PC-9 (cell line): ENCODE measurements at regions of chr9 and their contacts with region 1.

Region 1: DNA sequence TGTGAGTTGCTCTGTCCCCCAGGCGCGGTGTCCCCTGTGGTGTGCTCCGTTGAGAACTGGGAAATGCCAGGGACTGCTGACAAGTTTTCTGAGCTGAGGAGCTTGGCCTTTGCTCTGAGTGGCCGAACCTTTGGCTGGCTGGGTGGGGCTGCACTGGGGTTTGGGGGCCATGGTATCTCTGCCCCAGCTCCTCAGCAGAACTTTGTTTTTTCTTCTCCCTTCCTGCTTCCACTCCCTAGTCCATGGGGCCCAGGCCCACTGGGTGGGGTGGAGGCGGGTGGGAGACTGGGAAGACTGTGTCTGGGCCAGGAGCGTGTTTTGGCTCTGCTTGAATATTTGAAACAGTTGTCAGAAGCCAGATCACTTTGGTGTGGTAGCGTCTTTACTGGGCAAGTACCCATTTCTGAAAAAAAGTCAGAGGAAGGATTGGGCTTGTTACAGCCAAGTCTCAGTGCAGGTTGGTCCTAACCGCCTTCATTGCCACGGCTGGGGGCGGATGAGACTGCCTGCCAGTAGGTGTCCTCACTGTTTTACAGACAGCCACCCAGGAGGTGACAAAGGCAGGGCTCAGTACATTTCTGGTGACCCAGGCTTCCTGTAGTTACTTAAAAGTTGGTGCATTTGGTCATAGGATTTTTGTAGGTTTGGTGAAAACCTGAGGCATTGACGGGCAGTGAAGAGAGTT is 92.7 kb downstream of the DAB2IP start:
- DNase-seq: peak in 1 of 2 experiments; percentile 67
- H3K4me3 ChIP-seq: peak overlapping the region; percentile 42; the same call in 1 of the 2 replicates
- H3K27ac ChIP-seq: no peak overlapping the region
- H3K4me1 ChIP-seq: peaks cover 50% of the 10 kb centered on the region
- H3K27me3 ChIP-seq: no peaks in the 10 kb centered on the region
- CTCF ChIP-seq: peak; percentile 56; the same call in 1 of the 2 replicates

Region 2: GRCh38 chr9:121640076-121640475 is 104.1 kb before region 1 on chr9:
- CTCF ChIA-PET with region 1: no interaction called
- POLR2A ChIA-PET with region 1: no interaction called
- intact Hi-C with region 1: loop called (anchors 1 kb)
- DNase-seq: peak in 1 of 2 experiments; percentile 44
- H3K4me3 ChIP-seq: no peak overlapping the region
- H3K27ac ChIP-seq: no peak overlapping the region
- H3K4me1 ChIP-seq: peaks cover 9% of the 10 kb centered on the region; the same call in 1 of the 2 replicates
- H3K27me3 ChIP-seq: no peaks in the 10 kb centered on the region
- CTCF ChIP-seq: peak; percentile 73

Region 3: GRCh38 chr9:121698627-121699570 is 45.2 kb before region 1 on chr9:
- CTCF ChIA-PET with region 1: no interaction called
- POLR2A ChIA-PET with region 1: no interaction called
- intact Hi-C with region 1: loop called (anchors 2 kb)
- DNase-seq: peak in 1 of 2 experiments; percentile 41
- H3K4me3 ChIP-seq: peak overlapping the region; percentile 60; the same call in 1 of the 2 replicates
- H3K27ac ChIP-seq: no peak overlapping the region
- H3K4me1 ChIP-seq: no peaks in the 10 kb centered on the region
- H3K27me3 ChIP-seq: no peaks in the 10 kb centered on the region
- CTCF ChIP-seq: no peak

Region 4: DNA sequence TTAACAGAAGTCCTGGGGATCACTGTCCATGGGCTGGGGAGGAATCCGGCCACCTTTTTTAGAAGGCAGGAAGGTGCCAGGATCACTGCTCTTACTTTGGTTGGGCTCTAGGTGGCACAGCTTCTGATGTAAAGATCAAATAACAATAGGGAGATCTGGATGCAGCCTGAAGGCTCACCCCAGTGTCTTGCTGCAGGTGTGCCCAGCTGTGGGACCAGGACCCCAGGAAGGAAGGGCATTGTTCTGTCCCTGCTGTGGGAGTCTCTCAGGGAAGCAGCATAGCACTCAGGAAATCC is 23.1 kb before region 1 on chr9:
- CTCF ChIA-PET with region 1: interaction called, 3 read pairs
- POLR2A ChIA-PET with region 1: interaction called, 3 read pairs
- intact Hi-C with region 1: loop called (anchors 2 kb)
- DNase-seq: no peak
- H3K4me3 ChIP-seq: no peak overlapping the region
- H3K27ac ChIP-seq: no peak overlapping the region
- H3K4me1 ChIP-seq: peaks cover 15% of the 10 kb centered on the region
- H3K27me3 ChIP-seq: no peaks in the 10 kb centered on the region
- CTCF ChIP-seq: peak; percentile 20; the same call in 1 of the 2 replicates

Region 5: DNA sequence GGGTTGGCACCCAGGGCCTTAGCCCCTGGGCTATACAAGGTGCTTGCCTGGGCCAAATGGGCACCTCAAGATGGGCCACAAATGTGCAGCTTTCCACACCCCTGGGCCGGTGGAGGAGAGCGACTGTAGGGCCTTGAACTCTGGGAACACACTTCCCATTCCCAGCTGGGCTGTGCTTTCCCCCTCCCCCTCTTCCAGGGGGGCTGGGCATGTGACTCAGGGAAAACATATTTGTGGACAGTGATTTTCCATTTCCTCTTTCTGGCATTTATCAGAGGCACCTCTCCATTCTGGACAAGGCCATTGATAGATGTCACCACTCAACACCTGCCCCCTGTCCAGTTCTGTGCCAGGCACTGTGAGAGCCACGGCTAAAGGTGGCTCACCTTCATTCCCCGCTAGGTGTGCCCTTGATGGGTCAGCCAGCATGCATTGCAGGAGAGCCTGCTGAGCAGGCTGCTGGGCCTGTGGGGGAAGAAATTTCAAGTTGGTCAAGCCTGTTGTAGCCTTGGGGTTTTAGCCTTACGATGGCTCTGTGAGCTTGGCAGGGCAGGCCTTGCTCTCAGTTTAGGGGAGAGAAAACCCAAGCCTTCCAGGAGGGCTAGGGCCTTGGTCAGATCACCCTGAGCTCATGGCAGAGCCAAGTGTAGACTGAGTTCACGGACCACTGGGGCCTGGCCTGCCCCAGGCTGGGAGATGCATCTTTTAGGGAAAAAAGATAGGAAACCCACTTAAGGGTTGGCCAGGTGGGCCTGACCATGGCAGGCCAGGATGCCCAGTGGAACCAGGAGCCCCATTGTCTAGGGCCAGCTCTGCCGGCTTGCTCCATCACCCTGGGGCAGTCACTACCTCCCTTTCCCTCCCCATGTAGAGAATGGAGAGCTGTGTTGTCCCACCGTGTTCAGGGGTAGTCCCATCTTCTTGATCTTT is 21.1 kb after region 1 on chr9:
- CTCF ChIA-PET with region 1: interaction called, 6 read pairs
- POLR2A ChIA-PET with region 1: no interaction called
- intact Hi-C with region 1: loop called (anchors 1 kb)
- DNase-seq: peak; percentile 88 to 94
- H3K4me3 ChIP-seq: no peak overlapping the region
- H3K27ac ChIP-seq: peak overlapping the region; percentile 80
- H3K4me1 ChIP-seq: peaks cover 18% of the 10 kb centered on the region
- H3K27me3 ChIP-seq: no peaks in the 10 kb centered on the region
- CTCF ChIP-seq: peak; percentile 57; the same call in 1 of the 2 replicates

Region 6: DNA sequence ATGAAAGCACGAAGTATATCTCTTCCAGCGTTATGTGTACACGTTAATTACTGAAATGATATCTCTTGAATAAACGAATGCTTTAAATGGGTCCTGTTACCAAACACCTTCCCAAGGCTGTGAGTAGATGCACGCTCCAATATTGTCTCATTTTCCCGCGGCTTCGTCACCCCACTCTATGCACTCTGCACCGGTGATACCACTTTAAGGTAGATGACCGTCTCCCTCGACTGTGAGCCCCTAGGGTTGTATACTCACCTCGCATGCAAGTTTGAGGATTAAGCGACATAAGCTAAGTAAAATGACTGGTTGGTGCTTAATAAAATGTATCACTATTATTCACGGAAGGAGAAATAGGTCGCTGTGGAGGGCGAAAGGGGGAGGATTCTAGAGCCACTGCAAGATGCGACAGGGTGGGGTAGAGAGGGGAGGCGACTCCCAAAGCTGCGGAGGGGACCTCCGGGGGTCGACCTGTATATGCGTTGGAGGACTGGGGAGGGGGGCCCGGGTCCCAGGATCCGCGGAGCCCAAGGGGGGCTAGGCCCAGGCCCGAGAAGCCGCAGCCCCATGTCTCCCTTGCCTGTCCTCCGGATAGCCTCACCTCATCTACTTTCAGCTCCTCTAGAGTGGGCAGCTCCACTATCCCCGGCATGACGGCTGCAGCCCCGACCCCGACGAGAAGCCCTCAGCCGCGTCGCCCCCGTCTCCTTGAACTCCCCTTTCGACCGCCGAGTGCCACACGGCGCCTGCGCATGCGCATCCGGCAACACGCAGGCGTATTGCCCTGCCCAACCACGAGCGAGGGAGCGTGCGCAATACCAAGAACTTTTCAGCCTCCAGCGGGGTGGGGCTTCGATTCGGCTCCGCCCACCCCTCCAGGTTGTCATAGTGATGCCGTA is 415.1 kb after region 1 on chr9 and contains the starts of genes MORN5 and NDUFA8:
- CTCF ChIA-PET with region 1: no interaction called
- POLR2A ChIA-PET with region 1: no interaction called
- intact Hi-C with region 1: no loop called
- DNase-seq: peak; percentile 81 to 98
- H3K4me3 ChIP-seq: peak within 1 kb of the TSS; percentile 90
- H3K27ac ChIP-seq: no peak within 1 kb of the TSS
- H3K4me1 ChIP-seq: peaks cover 12% of the 10 kb centered on the region; the same call in 1 of the 2 replicates
- H3K27me3 ChIP-seq: peaks cover 20% of the 10 kb centered on the region
- CTCF ChIP-seq: no peak
- total RNA-seq, gene MORN5: not detected in 2 replicates
- total RNA-seq, gene NDUFA8: 73.4 and 84.6 TPM in 2 replicates